ENCODE measurements at regions of chr21 and their contacts with region 1.

Region 1: DNA sequence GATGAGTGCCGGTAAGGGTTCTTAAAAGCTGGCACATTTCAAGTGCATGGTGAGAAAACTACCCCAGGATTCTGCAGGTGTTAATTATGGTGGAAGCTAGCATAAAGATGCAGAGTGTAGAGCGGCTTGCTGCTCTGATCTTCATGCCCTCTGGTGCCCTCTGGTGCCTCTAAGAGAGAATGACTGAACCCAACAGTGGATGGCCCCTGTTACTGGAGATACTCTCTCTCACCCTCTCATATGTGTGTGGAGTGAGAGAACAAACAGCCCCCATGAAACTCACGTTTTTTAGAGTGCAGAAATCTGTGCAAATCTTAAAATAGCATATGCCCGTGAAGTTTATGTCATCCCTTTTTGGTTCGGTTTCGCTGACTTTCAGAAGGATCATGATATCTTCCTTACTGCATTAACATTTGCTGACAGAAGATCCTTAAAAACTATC is 90.0 kb downstream of the GRIK1 start:
- DNase-seq: peak in 4 of 6 donors; percentile 31 to 65 (median 38)
- ATAC-seq: peak; percentile 91 to 100 (median 99)
- H3K4me3 ChIP-seq: no peak overlapping the region
- H3K27ac ChIP-seq: no peak overlapping the region
- H3K4me1 ChIP-seq: no peaks in the 10 kb centered on the region
- H3K27me3 ChIP-seq: no peaks in the 10 kb centered on the region
- CTCF ChIP-seq: peak; percentile 49 to 68 (median 61)

Region 2: DNA sequence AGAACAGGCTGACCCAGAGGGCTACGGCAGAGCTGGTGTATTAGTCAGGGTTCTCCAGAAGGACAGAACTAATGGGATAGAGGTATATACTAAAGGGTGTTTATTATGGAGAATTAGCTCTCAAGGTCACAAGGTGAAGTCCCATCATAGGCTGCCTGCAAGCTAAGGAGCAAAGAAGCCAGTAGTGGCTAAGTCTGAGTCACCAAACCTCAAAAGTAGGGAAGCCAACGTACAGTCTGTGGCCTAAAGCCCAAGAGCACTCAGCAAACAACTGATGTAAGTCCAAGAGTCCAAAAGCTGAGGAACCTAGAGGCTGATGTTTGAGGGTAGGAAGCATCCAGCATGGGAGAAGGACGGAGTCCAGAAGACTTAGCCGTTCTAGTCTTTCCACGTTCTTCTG is 371.8 kb before region 1 on chr21:
- intact Hi-C with region 1: loop called in 2 of 3 experiments (anchors 5 to 10 kb)
- DNase-seq: no peak
- ATAC-seq: peak in 1 of 4 donors; percentile 10
- H3K4me3 ChIP-seq: no peak overlapping the region
- H3K27ac ChIP-seq: no peak overlapping the region
- H3K4me1 ChIP-seq: peaks cover 0 to 12% (median 9%) of the 10 kb centered on the region in 3 donors
- H3K27me3 ChIP-seq: no peaks in the 10 kb centered on the region
- CTCF ChIP-seq: no peak